Activated CD4-positive, alpha-beta T cell treated with anti-CD3 and anti-CD28 coated beads, Interleukin-2, amount 10 ng/mL, durations not matched to agents 7 days and 5 days (primary cell): ENCODE measurements at regions of chrX and their contacts with region 1.

Region 1: DNA sequence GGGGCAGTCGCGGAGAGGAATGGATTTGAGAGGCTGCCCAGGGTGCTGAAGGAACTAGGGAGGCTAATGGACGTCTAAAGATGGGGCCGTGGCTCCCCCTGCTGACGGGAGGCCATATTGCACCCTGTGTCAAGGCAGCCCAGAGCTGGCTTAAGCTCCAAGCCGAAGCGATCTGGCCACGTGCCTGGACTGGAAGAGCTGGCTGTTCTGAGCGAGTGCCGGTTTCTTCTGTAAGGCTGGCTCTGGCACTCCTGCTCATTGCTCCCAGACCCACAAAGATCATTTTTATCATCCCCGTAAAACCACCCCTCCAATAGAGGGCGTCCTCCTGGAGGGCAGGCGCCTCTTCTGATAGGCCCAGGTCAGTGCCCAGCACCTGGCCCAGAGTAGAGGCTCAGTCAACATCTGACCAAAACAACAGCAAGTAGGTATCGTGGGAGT is 5.6 kb downstream of the PNCK start:
- DNase-seq: peak; percentile 76
- H3K4me3 Mint-ChIP-seq: peak overlapping the region; percentile 69
- H3K27ac Mint-ChIP-seq: peak overlapping the region; percentile 33
- H3K4me1 Mint-ChIP-seq: peaks cover 7% of the 10 kb centered on the region
- H3K27me3 Mint-ChIP-seq: peaks cover 22% of the 10 kb centered on the region

Region 2: GRCh38 chrX:153539171-153539978 is 128.6 kb before region 1 on chrX:
- CTCF ChIA-PET with region 1: interaction called, 13 read pairs
- POLR2A ChIA-PET with region 1: no interaction called
- DNase-seq: peak; percentile 54
- H3K4me3 Mint-ChIP-seq: no peak overlapping the region
- H3K27ac Mint-ChIP-seq: no peak overlapping the region
- H3K4me1 Mint-ChIP-seq: no peaks in the 10 kb centered on the region
- H3K27me3 Mint-ChIP-seq: no peaks in the 10 kb centered on the region

Region 3: GRCh38 chrX:153554519-153555167 is 113.3 kb before region 1 on chrX:
- CTCF ChIA-PET with region 1: interaction called, 13 read pairs
- POLR2A ChIA-PET with region 1: no interaction called
- DNase-seq: peak; percentile 64
- H3K4me3 Mint-ChIP-seq: no peak overlapping the region
- H3K27ac Mint-ChIP-seq: no peak overlapping the region
- H3K4me1 Mint-ChIP-seq: no peaks in the 10 kb centered on the region
- H3K27me3 Mint-ChIP-seq: no peaks in the 10 kb centered on the region